Ascending aorta (tissue), 2 donors: ENCODE measurements at regions of chr13 and their contacts with region 1.

Region 1: DNA sequence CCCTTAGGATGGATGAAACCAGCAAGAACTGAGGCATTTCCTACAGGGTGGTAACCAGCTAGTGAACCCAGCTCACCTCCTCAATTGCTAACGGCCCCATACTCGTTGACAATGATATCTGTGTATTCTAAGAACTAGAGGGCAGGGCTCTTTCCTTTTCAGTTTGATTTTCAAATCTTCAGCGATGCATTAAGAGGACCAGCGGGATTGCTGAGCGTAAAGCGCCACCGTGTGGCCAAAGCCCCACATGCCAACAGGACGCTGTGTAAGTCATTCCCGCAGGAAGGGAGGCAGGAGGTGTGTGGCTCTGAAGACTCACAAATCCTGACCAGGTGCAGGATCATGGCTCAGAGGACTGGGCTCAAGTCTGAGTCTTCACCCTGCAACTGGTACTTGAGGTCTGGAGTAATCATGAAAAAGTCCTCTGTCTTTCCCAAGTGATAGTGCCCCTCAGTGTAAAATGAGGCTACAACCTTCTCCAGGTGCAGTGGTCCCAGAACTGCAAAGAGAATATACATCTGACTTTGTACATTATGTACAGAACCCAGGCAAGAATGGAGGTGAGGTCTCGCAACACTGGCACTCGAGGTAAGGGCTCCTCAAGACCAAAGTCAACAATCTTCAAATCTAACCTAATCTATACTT is 40.9 kb downstream of the C13orf42 start:
- DNase-seq: peak in 1 of 2 donors; percentile 85
- H3K4me3 ChIP-seq: no peak overlapping the region
- H3K27ac ChIP-seq: no peak overlapping the region
- H3K4me1 ChIP-seq: no peaks in the 10 kb centered on the region
- H3K27me3 ChIP-seq: no peaks in the 10 kb centered on the region
- CTCF ChIP-seq: peak; percentile 83 to 92 (median 91)

Region 2: DNA sequence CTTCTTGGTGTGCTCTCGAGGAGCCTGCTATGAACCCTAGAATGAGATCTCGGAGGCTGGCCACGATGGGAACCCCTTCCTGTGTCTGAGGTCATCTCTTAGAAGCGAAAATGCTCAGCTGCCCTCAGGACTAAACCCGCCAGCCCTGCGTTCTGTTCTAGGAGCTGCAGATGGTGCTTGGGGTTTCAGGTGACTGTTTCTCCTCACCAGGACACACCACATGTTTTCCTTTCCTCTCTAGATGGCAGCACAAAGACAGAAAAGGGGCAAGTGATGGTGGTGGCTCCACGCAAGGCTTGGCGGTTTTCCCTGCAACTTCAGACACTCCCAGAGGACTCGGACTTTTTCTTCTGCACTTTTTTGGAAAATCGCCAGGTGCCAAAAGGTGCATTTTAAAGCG is 100.4 kb before region 1 on chr13:
- intact Hi-C with region 1: loop called (anchors 1 kb)
- DNase-seq: no peak
- H3K4me3 ChIP-seq: no peak overlapping the region
- H3K27ac ChIP-seq: no peak overlapping the region
- H3K4me1 ChIP-seq: no peaks in the 10 kb centered on the region
- H3K27me3 ChIP-seq: no peaks in the 10 kb centered on the region
- CTCF ChIP-seq: peak in 2 of 3 experiments; percentile 12 to 43